RWPE1 (cell line): ENCODE measurements at regions of chr6 and their contacts with region 1.

Region 1: DNA sequence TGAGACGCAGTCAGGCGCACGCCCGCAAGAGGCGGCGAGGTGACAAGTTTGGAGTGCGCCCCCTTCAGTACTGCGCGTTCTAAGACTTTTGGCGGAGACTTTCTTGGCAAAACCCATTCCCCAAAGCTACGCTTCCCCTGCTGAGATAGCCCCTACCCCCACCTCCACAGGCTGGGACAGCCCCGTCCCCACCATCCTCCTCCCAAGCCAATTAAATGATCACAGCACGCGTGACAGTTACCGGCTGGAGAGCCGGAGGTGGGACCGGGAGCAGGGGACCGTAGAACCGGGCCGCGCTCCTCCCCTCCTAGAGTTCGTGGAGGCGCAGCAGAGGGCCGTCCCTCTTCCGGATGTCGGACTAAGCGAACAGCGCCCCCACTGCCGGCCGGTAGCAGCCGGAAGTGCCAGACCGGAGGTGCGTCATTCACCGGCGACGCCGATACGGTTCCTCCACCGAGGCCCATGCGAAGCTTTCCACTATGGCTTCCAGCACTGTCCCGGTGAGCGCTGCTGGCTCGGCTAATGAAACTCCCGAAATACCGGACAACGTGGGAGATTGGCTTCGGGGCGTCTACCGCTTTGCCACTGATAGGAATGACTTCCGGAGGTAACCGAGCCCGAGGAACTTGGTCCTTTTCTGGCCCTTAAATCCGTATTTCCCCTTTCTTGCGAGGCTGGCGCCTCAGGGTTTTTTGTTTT is at the start of gene TOMM6:
- DNase-seq: peak; percentile 89
- H3K27ac ChIP-seq: peak within 1 kb of the TSS; percentile 89
- CTCF ChIP-seq: peak; percentile 85

Region 2: GRCh38 chr6:41373301-41373918 is 414.0 kb before region 1 on chr6:
- CTCF ChIA-PET with region 1: no interaction called
- POLR2A ChIA-PET with region 1: no interaction called
- DNase-seq: no peak
- H3K27ac ChIP-seq: no peak overlapping the region
- CTCF ChIP-seq: no peak

Region 3: GRCh38 chr6:41694815-41695526 is 92.4 kb before region 1 on chr6:
- CTCF ChIA-PET with region 1: no interaction called
- POLR2A ChIA-PET with region 1: no interaction called
- DNase-seq: no peak
- H3K27ac ChIP-seq: peak overlapping the region; percentile 55
- CTCF ChIP-seq: no peak

Region 4: GRCh38 chr6:41775293-41776181 is 11.8 kb before region 1 on chr6:
- CTCF ChIA-PET with region 1: interaction called, 13 read pairs
- POLR2A ChIA-PET with region 1: no interaction called
- DNase-seq: peak; percentile 70
- H3K27ac ChIP-seq: no peak overlapping the region
- CTCF ChIP-seq: peak; percentile 70

Region 5: DNA sequence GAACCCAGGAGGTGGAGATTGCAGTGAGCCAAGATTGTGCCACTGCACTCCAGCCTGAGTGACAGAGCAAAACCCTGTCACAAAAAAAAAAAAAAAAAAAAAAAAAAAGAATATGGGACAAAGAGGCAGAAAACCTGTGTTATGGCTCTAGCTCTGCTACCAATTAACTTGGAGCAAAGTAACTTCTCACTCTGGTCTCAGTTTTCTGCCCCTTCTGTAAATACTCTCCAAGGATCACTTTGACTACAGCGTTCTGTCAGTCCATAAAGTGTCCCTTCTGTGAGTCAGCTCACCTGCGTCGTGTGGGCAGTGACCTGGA is 330.4 kb after region 1 on chr6:
- CTCF ChIA-PET with region 1: no interaction called
- POLR2A ChIA-PET with region 1: interaction called, 12 read pairs
- DNase-seq: no peak
- H3K27ac ChIP-seq: peak overlapping the region; percentile 95
- CTCF ChIP-seq: no peak